ENCODE measurements at regions of chrX and their contacts with region 1.

Region 1: GRCh38 chrX:2647627-2648026 is 43.5 kb upstream of the CD99 start:
- DNase-seq: no peak
- H3K4me3 ChIP-seq: no peak overlapping the region
- H3K27ac ChIP-seq: no peak overlapping the region
- H3K4me1 ChIP-seq: no peaks in the 10 kb centered on the region
- H3K27me3 ChIP-seq: no peaks in the 10 kb centered on the region
- CTCF ChIP-seq: no peak
- EP300 ChIP-seq: no peak
- POLR2A ChIP-seq: no peak

Region 2: DNA sequence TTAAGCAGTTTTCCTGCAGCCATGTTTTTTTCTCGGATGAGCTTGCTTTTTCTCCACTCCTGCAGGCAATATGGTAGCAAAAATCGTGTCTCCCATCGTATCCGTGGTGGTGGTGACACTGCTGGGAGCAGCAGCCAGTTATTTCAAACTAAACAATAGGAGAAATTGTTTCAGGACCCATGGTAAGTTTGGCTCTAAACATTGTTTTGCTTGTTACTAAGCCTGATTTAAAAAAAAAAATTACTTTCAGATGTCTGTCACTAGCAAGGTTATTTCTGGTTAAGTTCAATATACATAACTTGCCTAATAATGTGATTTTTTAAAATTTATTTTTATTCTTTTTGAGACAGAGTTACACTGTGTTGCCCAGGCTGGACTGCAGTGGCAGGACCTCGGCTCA is 163.6 kb after region 1 on chrX:
- intact Hi-C with region 1: loop called in 3 of 4 experiments (anchors 5 to 10 kb)
- DNase-seq: no peak
- H3K4me3 ChIP-seq: no peak overlapping the region
- H3K27ac ChIP-seq: no peak overlapping the region
- H3K4me1 ChIP-seq: no peaks in the 10 kb centered on the region
- H3K27me3 ChIP-seq: no peaks in the 10 kb centered on the region
- CTCF ChIP-seq: no peak
- EP300 ChIP-seq: no peak
- POLR2A ChIP-seq: no peak

Measured in ovary (tissue), 10 donors.